ENCODE measurements at regions of chr5 and their contacts with region 1.

Region 1: GRCh38 chr5:149345147-149345875 is at the start of gene GRPEL2:
- DNase-seq: peak; percentile 65 to 93
- ATAC-seq: peak; percentile 80 to 84 (median 83)
- H3K4me3 ChIP-seq: peak within 1 kb of the TSS; percentile 97
- H3K4me3 Mint-ChIP-seq: peak within 1 kb of the TSS; percentile 97
- H3K27ac ChIP-seq: peak within 1 kb of the TSS; percentile 75
- H3K27ac Mint-ChIP-seq: peak within 1 kb of the TSS; percentile 92 to 94
- H3K4me1 ChIP-seq: peaks cover 25% of the 10 kb centered on the region
- H3K4me1 Mint-ChIP-seq: peaks cover 51 to 52% of the 10 kb centered on the region in 2 donors
- H3K27me3 ChIP-seq: no peaks in the 10 kb centered on the region
- H3K27me3 Mint-ChIP-seq: no peaks in the 10 kb centered on the region
- CTCF ChIP-seq: no peak
- total RNA-seq, gene GRPEL2: 5.6 to 12.9 (median 6.8) TPM

Region 2: GRCh38 chr5:148383564-148384379 is 961.5 kb before region 1 on chr5 and contains the start of gene FBXO38:
- intact Hi-C with region 1: loop called (anchors 5 kb)
- DNase-seq: peak; percentile 95 to 99
- ATAC-seq: peak; percentile 91 to 97 (median 92)
- H3K4me3 ChIP-seq: peak within 1 kb of the TSS; percentile 93
- H3K4me3 Mint-ChIP-seq: peak within 1 kb of the TSS; percentile 90
- H3K27ac ChIP-seq: peak within 1 kb of the TSS; percentile 97
- H3K27ac Mint-ChIP-seq: peak within 1 kb of the TSS; percentile 95 to 96
- H3K4me1 ChIP-seq: peaks cover 8% of the 10 kb centered on the region
- H3K4me1 Mint-ChIP-seq: peaks cover 42 to 52% of the 10 kb centered on the region in 2 donors
- H3K27me3 ChIP-seq: no peaks in the 10 kb centered on the region
- H3K27me3 Mint-ChIP-seq: peaks cover 0 to 3% of the 10 kb centered on the region in 2 donors
- CTCF ChIP-seq: no peak
- total RNA-seq, gene FBXO38: 55.2 to 76.6 (median 65.1) TPM

Region 3: GRCh38 chr5:148826053-148826738 is 519.1 kb before region 1 on chr5 and contains the start of gene ADRB2:
- intact Hi-C with region 1: no loop called
- DNase-seq: peak; percentile 92 to 95
- ATAC-seq: peak; percentile 88 to 96 (median 90)
- H3K4me3 ChIP-seq: peak within 1 kb of the TSS; percentile 69
- H3K4me3 Mint-ChIP-seq: peak within 1 kb of the TSS; percentile 98
- H3K27ac ChIP-seq: peak within 1 kb of the TSS; percentile 85
- H3K27ac Mint-ChIP-seq: peak within 1 kb of the TSS; percentile 89 to 91
- H3K4me1 ChIP-seq: peaks cover 31% of the 10 kb centered on the region
- H3K4me1 Mint-ChIP-seq: peaks cover 40 to 59% of the 10 kb centered on the region in 2 donors
- H3K27me3 ChIP-seq: no peaks in the 10 kb centered on the region
- H3K27me3 Mint-ChIP-seq: no peaks in the 10 kb centered on the region
- CTCF ChIP-seq: no peak
- total RNA-seq, gene ADRB2: 47.1 to 78.9 (median 60.7) TPM

Region 4: DNA sequence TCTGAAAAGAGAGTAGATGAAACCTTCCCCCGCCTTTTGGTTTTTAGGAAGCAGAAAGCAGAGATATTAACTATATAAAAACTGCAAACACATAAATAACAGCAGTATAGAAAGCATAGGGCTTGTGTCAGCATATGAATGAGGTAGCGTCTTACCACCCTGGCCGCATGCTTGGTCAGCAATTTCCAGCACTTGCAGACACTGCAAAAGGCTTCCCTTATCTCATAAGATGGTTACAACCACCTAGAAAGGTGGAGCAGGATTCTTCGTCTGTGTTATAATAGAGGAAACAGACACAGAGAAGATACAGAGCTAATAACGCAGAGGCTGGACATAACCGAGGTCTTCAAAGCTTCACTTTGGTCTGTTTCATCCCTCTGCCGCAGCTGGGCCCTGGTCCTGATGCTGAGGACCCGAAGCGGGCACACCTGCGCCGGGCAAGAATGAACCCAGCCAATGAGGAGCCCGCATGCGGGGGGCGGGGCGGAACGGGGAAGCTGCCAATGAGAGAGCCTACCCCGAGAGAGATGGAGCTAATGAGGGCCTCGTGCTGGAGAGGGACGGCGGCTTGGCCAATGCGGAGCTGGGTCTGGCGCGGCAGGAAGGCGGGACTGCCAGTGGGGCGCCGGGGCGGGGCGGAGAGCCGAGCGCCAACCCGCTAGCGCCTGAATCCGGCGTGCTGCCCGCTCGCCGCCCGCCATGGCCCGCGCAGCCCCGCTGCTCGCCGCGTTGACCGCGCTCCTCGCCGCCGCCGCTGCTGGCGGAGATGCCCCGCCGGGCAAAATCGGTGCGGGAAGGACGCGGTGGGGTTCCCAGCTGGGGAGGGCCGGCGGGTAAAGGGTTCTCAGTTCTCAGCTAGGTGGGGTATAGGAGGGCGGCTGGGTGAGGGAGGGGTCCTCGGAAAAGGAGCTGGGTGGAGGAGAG is 12.3 kb after region 1 on chr5 and contains the start of gene PCYOX1L:
- intact Hi-C with region 1: loop called (anchors 1 kb)
- DNase-seq: peak; percentile 91 to 97
- ATAC-seq: peak; percentile 97 to 99 (median 98)
- H3K4me3 ChIP-seq: peak within 1 kb of the TSS; percentile 78
- H3K4me3 Mint-ChIP-seq: peak within 1 kb of the TSS; percentile 93
- H3K27ac ChIP-seq: peak within 1 kb of the TSS; percentile 62
- H3K27ac Mint-ChIP-seq: peak within 1 kb of the TSS; percentile 85 to 93
- H3K4me1 ChIP-seq: peaks cover 20% of the 10 kb centered on the region
- H3K4me1 Mint-ChIP-seq: peaks cover 31 to 36% of the 10 kb centered on the region in 2 donors
- H3K27me3 ChIP-seq: no peaks in the 10 kb centered on the region
- H3K27me3 Mint-ChIP-seq: no peaks in the 10 kb centered on the region
- CTCF ChIP-seq: no peak
- total RNA-seq, gene PCYOX1L: 16.6 to 18.1 (median 16.8) TPM

Measured in natural killer cell (primary cell).